CD4-positive, alpha-beta memory T cell (primary cell): ENCODE measurements at regions of chr1 and their contacts with region 1.

Region 1: GRCh38 chr1:198157241-198157846 is 546 bp downstream of the NEK7 start:
- DNase-seq: peak; percentile 77 to 89 (median 79)
- H3K4me3 ChIP-seq: peak overlapping the region; percentile 59 to 83
- H3K4me3 Mint-ChIP-seq: peak overlapping the region; percentile 98 to 100 (median 100)
- H3K27ac ChIP-seq: peak overlapping the region; percentile 95
- H3K27ac Mint-ChIP-seq: peak overlapping the region; percentile 98 to 100 (median 100)
- H3K4me1 ChIP-seq: peaks cover 43% of the 10 kb centered on the region
- H3K4me1 Mint-ChIP-seq: peaks cover 27 to 57% (median 41%) of the 10 kb centered on the region in 4 donors
- H3K27me3 ChIP-seq: no peaks in the 10 kb centered on the region
- H3K27me3 Mint-ChIP-seq: no peaks in the 10 kb centered on the region

Region 2: GRCh38 chr1:197908716-197909220 is 248.6 kb before region 1 on chr1:
- CTCF ChIA-PET with region 1: no interaction called
- POLR2A ChIA-PET with region 1: no interaction called
- intact Hi-C with region 1: loop called (anchors 5 kb)
- DNase-seq: no peak
- H3K4me3 ChIP-seq: no peak overlapping the region
- H3K4me3 Mint-ChIP-seq: peak overlapping the region in 4 of 8 donors; percentile 7 to 77 (median 31)
- H3K27ac ChIP-seq: no peak overlapping the region
- H3K27ac Mint-ChIP-seq: peak overlapping the region in 2 of 7 donors; percentile 18 to 72
- H3K4me1 ChIP-seq: peaks cover 52% of the 10 kb centered on the region
- H3K4me1 Mint-ChIP-seq: peaks cover 29 to 59% (median 42%) of the 10 kb centered on the region in 4 donors
- H3K27me3 ChIP-seq: peaks cover 93% of the 10 kb centered on the region
- H3K27me3 Mint-ChIP-seq: peaks cover 77 to 85% of the 10 kb centered on the region in 2 donors

Region 3: DNA sequence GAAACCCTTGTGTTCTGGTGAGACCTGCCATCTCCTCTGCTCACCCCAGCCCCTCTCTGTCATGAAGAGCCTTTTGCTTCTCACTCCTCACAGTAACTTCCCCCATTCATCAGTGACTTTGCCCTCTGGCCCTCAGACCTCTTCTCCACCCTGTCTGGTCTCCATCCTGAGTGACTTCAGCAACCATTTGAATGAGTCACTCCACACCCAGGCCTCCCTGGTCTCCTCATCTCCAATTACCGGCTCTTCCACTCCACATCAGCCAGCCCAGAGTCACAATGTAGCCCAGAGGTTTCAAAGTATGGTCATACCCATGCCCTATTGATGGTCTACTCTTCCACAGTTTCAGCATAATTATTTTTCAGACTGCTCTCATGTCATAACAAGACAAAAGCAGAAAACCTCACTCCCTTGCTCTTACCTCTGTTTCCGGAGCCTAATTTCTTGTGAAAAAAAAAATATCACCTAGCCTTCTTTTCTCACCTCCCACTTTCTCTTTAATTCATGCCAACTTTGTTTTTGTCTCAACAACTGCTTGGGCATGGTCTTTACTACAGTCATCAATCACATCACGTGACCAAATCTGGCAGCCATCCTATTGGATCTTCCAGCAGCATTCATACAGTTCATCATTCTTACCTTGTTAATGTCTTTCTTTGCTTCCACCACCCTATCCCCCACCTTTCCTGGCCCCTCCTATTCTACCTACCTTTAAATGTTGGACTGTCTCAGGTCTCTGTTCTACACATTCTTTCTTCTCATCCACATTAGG is 36.1 kb before region 1 on chr1:
- CTCF ChIA-PET with region 1: no interaction called
- POLR2A ChIA-PET with region 1: no interaction called
- intact Hi-C with region 1: no loop called
- DNase-seq: no peak
- H3K4me3 ChIP-seq: no peak overlapping the region
- H3K4me3 Mint-ChIP-seq: no peak overlapping the region
- H3K27ac ChIP-seq: no peak overlapping the region
- H3K27ac Mint-ChIP-seq: no peak overlapping the region
- H3K4me1 ChIP-seq: no peaks in the 10 kb centered on the region
- H3K4me1 Mint-ChIP-seq: no peaks in the 10 kb centered on the region
- H3K27me3 ChIP-seq: no peaks in the 10 kb centered on the region
- H3K27me3 Mint-ChIP-seq: peaks cover 0 to 1% of the 10 kb centered on the region in 2 donors

Region 4: GRCh38 chr1:198167436-198167934 is 10.1 kb after region 1 on chr1:
- CTCF ChIA-PET with region 1: interaction called, 35 read pairs
- POLR2A ChIA-PET with region 1: interaction called, 120 read pairs
- intact Hi-C with region 1: loop called (anchors 1 kb)
- DNase-seq: peak; percentile 54 to 77 (median 60)
- H3K4me3 ChIP-seq: no peak overlapping the region
- H3K4me3 Mint-ChIP-seq: peak overlapping the region; percentile 43 to 90 (median 76)
- H3K27ac ChIP-seq: peak overlapping the region; percentile 53
- H3K27ac Mint-ChIP-seq: peak overlapping the region; percentile 80 to 94 (median 90)
- H3K4me1 ChIP-seq: peaks cover 96% of the 10 kb centered on the region
- H3K4me1 Mint-ChIP-seq: peaks cover 65 to 87% (median 78%) of the 10 kb centered on the region in 4 donors
- H3K27me3 ChIP-seq: no peaks in the 10 kb centered on the region
- H3K27me3 Mint-ChIP-seq: no peaks in the 10 kb centered on the region

Region 5: GRCh38 chr1:198187973-198188588 is 30.7 kb after region 1 on chr1:
- CTCF ChIA-PET with region 1: interaction called, 6 read pairs
- POLR2A ChIA-PET with region 1: interaction called, 47 read pairs
- intact Hi-C with region 1: loop called (anchors 1 kb)
- DNase-seq: peak; percentile 57 to 74 (median 68)
- H3K4me3 ChIP-seq: peak overlapping the region in 1 of 2 donors; percentile 26
- H3K4me3 Mint-ChIP-seq: peak overlapping the region; percentile 7 to 84 (median 67)
- H3K27ac ChIP-seq: peak overlapping the region; percentile 57
- H3K27ac Mint-ChIP-seq: peak overlapping the region; percentile 76 to 93 (median 88)
- H3K4me1 ChIP-seq: peaks cover 94% of the 10 kb centered on the region
- H3K4me1 Mint-ChIP-seq: peaks cover 54 to 84% (median 74%) of the 10 kb centered on the region in 4 donors
- H3K27me3 ChIP-seq: no peaks in the 10 kb centered on the region
- H3K27me3 Mint-ChIP-seq: no peaks in the 10 kb centered on the region

Region 6: GRCh38 chr1:198241553-198241952 is 84.2 kb after region 1 on chr1:
- CTCF ChIA-PET with region 1: no interaction called
- POLR2A ChIA-PET with region 1: interaction called, 4 read pairs
- intact Hi-C with region 1: loop called (anchors 5 kb)
- DNase-seq: no peak
- H3K4me3 ChIP-seq: no peak overlapping the region
- H3K4me3 Mint-ChIP-seq: no peak overlapping the region
- H3K27ac ChIP-seq: no peak overlapping the region
- H3K27ac Mint-ChIP-seq: no peak overlapping the region
- H3K4me1 ChIP-seq: peaks cover 4% of the 10 kb centered on the region
- H3K4me1 Mint-ChIP-seq: peaks cover 14 to 37% (median 28%) of the 10 kb centered on the region in 4 donors
- H3K27me3 ChIP-seq: no peaks in the 10 kb centered on the region
- H3K27me3 Mint-ChIP-seq: no peaks in the 10 kb centered on the region

Region 7: DNA sequence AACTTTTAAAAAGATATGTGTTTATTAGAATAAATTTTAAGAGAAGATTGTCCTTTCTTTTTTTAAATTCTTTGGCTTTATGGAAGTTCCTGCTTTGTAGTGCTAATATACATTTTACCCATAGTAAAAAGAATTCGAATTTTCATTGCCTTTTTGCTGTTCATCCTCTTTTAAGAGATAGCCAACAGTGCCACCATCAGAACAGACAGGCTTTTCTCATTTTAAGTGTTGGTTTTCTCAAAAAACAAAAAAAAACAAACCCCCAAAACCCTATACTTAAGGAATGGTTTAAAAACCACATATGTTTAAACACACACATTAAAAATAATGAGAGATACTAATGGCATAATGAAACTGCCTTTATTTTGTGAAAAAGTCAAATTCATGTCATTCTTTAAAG is 118.3 kb after region 1 on chr1:
- CTCF ChIA-PET with region 1: interaction called, 4 read pairs
- POLR2A ChIA-PET with region 1: no interaction called
- intact Hi-C with region 1: loop called (anchors 2 kb)
- DNase-seq: no peak
- H3K4me3 ChIP-seq: no peak overlapping the region
- H3K4me3 Mint-ChIP-seq: no peak overlapping the region
- H3K27ac ChIP-seq: no peak overlapping the region
- H3K27ac Mint-ChIP-seq: no peak overlapping the region
- H3K4me1 ChIP-seq: no peaks in the 10 kb centered on the region
- H3K4me1 Mint-ChIP-seq: peaks cover 4 to 15% (median 11%) of the 10 kb centered on the region in 4 donors
- H3K27me3 ChIP-seq: no peaks in the 10 kb centered on the region
- H3K27me3 Mint-ChIP-seq: no peaks in the 10 kb centered on the region

Region 8: GRCh38 chr1:198638894-198639635 is 481.7 kb after region 1 on chr1 and contains the start of gene PTPRC:
- CTCF ChIA-PET with region 1: no interaction called
- POLR2A ChIA-PET with region 1: interaction called, 3 read pairs
- intact Hi-C with region 1: loop called (anchors 5 kb)
- DNase-seq: peak in 4 of 5 donors; percentile 50 to 67 (median 60)
- H3K4me3 ChIP-seq: peak within 1 kb of the TSS; percentile 61 to 78
- H3K4me3 Mint-ChIP-seq: peak within 1 kb of the TSS; percentile 82 to 99 (median 94)
- H3K27ac ChIP-seq: peak within 1 kb of the TSS; percentile 83
- H3K27ac Mint-ChIP-seq: peak within 1 kb of the TSS; percentile 86 to 98 (median 95)
- H3K4me1 ChIP-seq: peaks cover 60% of the 10 kb centered on the region
- H3K4me1 Mint-ChIP-seq: peaks cover 34 to 46% (median 39%) of the 10 kb centered on the region in 4 donors
- H3K27me3 ChIP-seq: no peaks in the 10 kb centered on the region
- H3K27me3 Mint-ChIP-seq: no peaks in the 10 kb centered on the region
- total RNA-seq, gene PTPRC: 974 to 987 TPM